Activated CD4-positive, alpha-beta T cell treated with anti-CD3 and anti-CD28 coated beads for 36 hours (primary cell): ENCODE measurements at regions of chr2 and their contacts with region 1.

Region 1: DNA sequence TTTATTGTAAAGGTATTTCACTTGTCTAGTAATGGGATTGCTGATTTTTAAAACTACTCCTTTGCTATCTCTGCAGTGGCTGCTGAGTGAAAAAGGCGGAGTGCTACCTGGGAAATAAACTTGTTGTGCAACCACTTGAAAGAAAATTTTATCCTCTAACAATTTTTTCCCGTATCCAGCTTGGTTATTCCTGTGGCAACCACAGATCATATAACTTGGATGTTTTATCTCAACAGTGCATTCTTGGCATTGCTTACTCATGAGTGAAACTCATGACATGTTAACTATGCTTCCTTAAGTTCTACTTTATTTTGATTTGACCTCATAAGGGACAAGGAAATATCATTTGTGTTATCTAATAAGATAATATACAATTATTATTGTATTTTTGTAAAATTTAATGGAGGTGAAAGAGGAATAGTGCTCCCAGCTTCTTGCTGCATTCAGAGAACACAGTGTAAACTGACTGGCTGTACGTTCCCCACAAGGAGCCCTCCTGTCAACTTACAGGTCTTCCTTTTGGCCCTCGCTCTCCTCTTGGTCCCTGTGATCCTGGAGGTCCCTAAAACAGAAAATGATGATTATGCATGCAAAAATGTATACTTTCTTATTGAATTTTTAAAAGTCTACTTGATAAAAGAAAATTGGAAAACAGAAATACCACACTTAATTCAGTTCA is 82.7 kb downstream of the COL5A2 start:
- DNase-seq: no peak
- ATAC-seq: no peak
- H3K4me3 Mint-ChIP-seq: no peak overlapping the region
- H3K27ac Mint-ChIP-seq: no peak overlapping the region
- H3K4me1 Mint-ChIP-seq: no peaks in the 10 kb centered on the region
- H3K27me3 Mint-ChIP-seq: peaks cover 2% of the 10 kb centered on the region

Region 2: DNA sequence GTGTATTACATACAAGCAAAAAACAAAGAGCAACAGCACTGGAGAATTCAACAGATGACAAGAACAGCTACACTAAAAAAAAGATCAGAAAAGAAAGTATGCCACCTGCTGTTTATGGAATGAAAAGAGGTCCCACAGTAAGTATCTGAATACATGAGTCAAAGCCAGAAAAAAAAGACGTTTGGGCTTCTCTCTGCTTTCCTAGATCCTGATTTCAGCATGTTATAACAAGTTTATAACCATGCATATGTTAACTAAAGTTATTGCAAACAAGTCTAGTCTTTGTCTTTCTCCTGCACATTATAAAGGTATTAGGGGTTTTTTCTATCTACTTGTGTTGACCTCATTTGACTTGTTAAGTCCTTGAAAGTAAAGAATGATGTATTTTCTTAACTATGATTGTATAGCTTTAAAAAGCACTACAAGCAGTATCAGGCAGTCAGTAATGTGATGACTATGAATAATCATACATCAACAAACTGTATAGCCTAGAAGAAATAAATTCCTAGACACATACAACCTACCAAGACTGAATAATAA is 191.1 kb after region 1 on chr2:
- CTCF ChIA-PET with region 1: interaction called, 9 read pairs
- POLR2A ChIA-PET with region 1: no interaction called
- intact Hi-C with region 1: loop called (anchors 1 kb)
- DNase-seq: no peak
- ATAC-seq: peak; percentile 85
- H3K4me3 Mint-ChIP-seq: no peak overlapping the region
- H3K27ac Mint-ChIP-seq: peak overlapping the region; percentile 23
- H3K4me1 Mint-ChIP-seq: peaks cover 48% of the 10 kb centered on the region
- H3K27me3 Mint-ChIP-seq: no peaks in the 10 kb centered on the region

Region 3: GRCh38 chr2:189347540-189347939 is 250.6 kb after region 1 on chr2:
- CTCF ChIA-PET with region 1: interaction called, 3 read pairs
- POLR2A ChIA-PET with region 1: no interaction called
- intact Hi-C with region 1: loop called (anchors 5 kb)
- DNase-seq: peak; percentile 6
- ATAC-seq: peak; percentile 12
- H3K4me3 Mint-ChIP-seq: no peak overlapping the region
- H3K27ac Mint-ChIP-seq: no peak overlapping the region
- H3K4me1 Mint-ChIP-seq: peaks cover 12% of the 10 kb centered on the region
- H3K27me3 Mint-ChIP-seq: no peaks in the 10 kb centered on the region

Region 4: GRCh38 chr2:189751080-189751658 is 654.3 kb after region 1 on chr2:
- CTCF ChIA-PET with region 1: no interaction called
- POLR2A ChIA-PET with region 1: no interaction called
- intact Hi-C with region 1: no loop called
- DNase-seq: peak; percentile 57
- ATAC-seq: peak; percentile 71
- H3K4me3 Mint-ChIP-seq: no peak overlapping the region
- H3K27ac Mint-ChIP-seq: no peak overlapping the region
- H3K4me1 Mint-ChIP-seq: no peaks in the 10 kb centered on the region
- H3K27me3 Mint-ChIP-seq: no peaks in the 10 kb centered on the region